Tibial artery (tissue), 4 donors: ENCODE measurements at regions of chr13 and their contacts with region 1.

Region 1: GRCh38 chr13:48233046-48233907 is at the start of gene ITM2B:
- DNase-seq: peak; percentile 62 to 88
- H3K4me3 ChIP-seq: peak within 1 kb of the TSS; percentile 78 to 91
- H3K27ac ChIP-seq: peak within 1 kb of the TSS; percentile 94 to 99
- H3K4me1 ChIP-seq: peaks cover 0 to 44% (median 29%) of the 10 kb centered on the region in 4 donors
- H3K27me3 ChIP-seq: no peaks in the 10 kb centered on the region
- CTCF ChIP-seq: peak; percentile 29 to 44

Region 2: GRCh38 chr13:48126944-48127830 is 106.1 kb before region 1 on chr13:
- intact Hi-C with region 1: loop called (anchors 2 kb)
- DNase-seq: peak; percentile 82 to 93
- H3K4me3 ChIP-seq: peak overlapping the region in 1 of 2 donors; percentile 8
- H3K27ac ChIP-seq: peak overlapping the region; percentile 76 to 83
- H3K4me1 ChIP-seq: peaks cover 0 to 37% (median 28%) of the 10 kb centered on the region in 4 donors
- H3K27me3 ChIP-seq: no peaks in the 10 kb centered on the region
- CTCF ChIP-seq: peak; percentile 70 to 73

Region 3: DNA sequence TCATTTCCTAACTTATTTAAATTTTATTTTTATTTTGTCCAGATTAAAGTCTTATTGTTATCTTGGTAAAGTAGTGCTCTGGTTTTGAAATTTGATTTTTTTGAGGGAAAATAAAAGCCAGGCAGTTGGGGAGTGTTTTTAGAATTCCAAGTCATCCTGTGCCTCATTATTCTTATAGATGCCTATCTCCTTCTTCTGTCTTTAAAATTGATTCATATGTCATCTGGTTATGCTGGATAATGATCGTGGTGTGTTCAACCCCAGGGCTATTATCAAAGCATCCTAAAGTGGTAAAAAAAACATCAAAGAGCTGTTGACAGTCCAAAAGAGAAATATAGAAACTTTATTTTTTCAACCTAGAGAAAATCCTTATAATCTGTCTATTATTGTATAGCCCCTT is 736.4 kb after region 1 on chr13:
- intact Hi-C with region 1: no loop called
- DNase-seq: no peak
- H3K4me3 ChIP-seq: no peak overlapping the region
- H3K27ac ChIP-seq: no peak overlapping the region
- H3K4me1 ChIP-seq: peaks cover 0 to 7% (median under 1%) of the 10 kb centered on the region in 4 donors
- H3K27me3 ChIP-seq: no peaks in the 10 kb centered on the region
- CTCF ChIP-seq: no peak

Region 4: GRCh38 chr13:49356223-49356622 is 1122.9 kb after region 1 on chr13:
- intact Hi-C with region 1: no loop called
- DNase-seq: no peak
- H3K4me3 ChIP-seq: no peak overlapping the region
- H3K27ac ChIP-seq: peak overlapping the region; percentile 82 to 83
- H3K4me1 ChIP-seq: peaks cover 0 to 64% (median 12%) of the 10 kb centered on the region in 4 donors
- H3K27me3 ChIP-seq: no peaks in the 10 kb centered on the region
- CTCF ChIP-seq: no peak